ENCODE measurements at regions of chr1 and their contacts with region 1.

Region 1: GRCh38 chr1:212857992-212858460 is at the start of gene FLVCR1:
- DNase-seq: peak; percentile 96
- H3K4me3 Mint-ChIP-seq: peak within 1 kb of the TSS; percentile 53
- H3K27ac Mint-ChIP-seq: peak within 1 kb of the TSS; percentile 98
- H3K4me1 Mint-ChIP-seq: peaks cover 15% of the 10 kb centered on the region
- H3K27me3 Mint-ChIP-seq: peaks cover 2% of the 10 kb centered on the region
- total RNA-seq, gene FLVCR1: 18.5 and 18.7 TPM in 2 replicates

Region 2: DNA sequence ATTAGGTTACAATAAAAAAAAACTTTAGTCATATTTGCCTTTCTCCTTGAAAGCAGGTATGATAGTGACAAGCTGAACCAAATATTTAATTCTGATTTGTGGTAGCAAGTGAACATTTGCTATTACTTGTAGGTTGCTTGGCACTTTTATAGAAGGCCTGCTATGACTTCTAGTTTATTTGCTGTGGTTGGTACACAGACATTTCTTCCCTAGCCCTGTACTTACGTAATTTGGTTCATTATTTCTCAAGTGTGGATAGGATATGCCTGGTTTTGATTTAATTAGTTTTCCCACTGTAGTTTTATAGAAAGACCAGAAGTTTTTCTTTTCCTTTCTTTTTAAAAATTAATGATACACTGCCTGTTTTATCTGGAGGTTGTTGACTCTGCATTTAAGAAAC is 516.9 kb before region 1 on chr1:
- intact Hi-C with region 1: no loop called
- DNase-seq: no peak
- H3K4me3 Mint-ChIP-seq: no peak overlapping the region
- H3K27ac Mint-ChIP-seq: no peak overlapping the region
- H3K4me1 Mint-ChIP-seq: no peaks in the 10 kb centered on the region
- H3K27me3 Mint-ChIP-seq: no peaks in the 10 kb centered on the region

Region 3: GRCh38 chr1:212621951-212622305 is 236.1 kb before region 1 on chr1:
- intact Hi-C with region 1: no loop called
- DNase-seq: no peak
- H3K4me3 Mint-ChIP-seq: no peak overlapping the region
- H3K27ac Mint-ChIP-seq: no peak overlapping the region
- H3K4me1 Mint-ChIP-seq: peaks cover 18% of the 10 kb centered on the region
- H3K27me3 Mint-ChIP-seq: peaks cover 4% of the 10 kb centered on the region

Region 4: GRCh38 chr1:212873518-212873917 is 15.5 kb after region 1 on chr1:
- intact Hi-C with region 1: no loop called
- DNase-seq: no peak
- H3K4me3 Mint-ChIP-seq: no peak overlapping the region
- H3K27ac Mint-ChIP-seq: no peak overlapping the region
- H3K4me1 Mint-ChIP-seq: no peaks in the 10 kb centered on the region
- H3K27me3 Mint-ChIP-seq: no peaks in the 10 kb centered on the region

Region 5: GRCh38 chr1:212950243-212951125 is 92.5 kb after region 1 on chr1 and contains the start of gene VASH2:
- intact Hi-C with region 1: loop called (anchors 1 kb)
- DNase-seq: peak; percentile 61
- H3K4me3 Mint-ChIP-seq: peak within 1 kb of the TSS; percentile 82
- H3K27ac Mint-ChIP-seq: no peak within 1 kb of the TSS
- H3K4me1 Mint-ChIP-seq: peaks cover 6% of the 10 kb centered on the region
- H3K27me3 Mint-ChIP-seq: peaks cover 52% of the 10 kb centered on the region
- total RNA-seq, gene VASH2: 0.10 and 0.39 TPM in 2 replicates

Region 6: GRCh38 chr1:213051127-213051880 is 193.3 kb after region 1 on chr1 and contains the start of gene RPS6KC1:
- intact Hi-C with region 1: loop called (anchors 1 kb)
- DNase-seq: peak; percentile 74
- H3K4me3 Mint-ChIP-seq: peak within 1 kb of the TSS; percentile 96
- H3K27ac Mint-ChIP-seq: peak within 1 kb of the TSS; percentile 90
- H3K4me1 Mint-ChIP-seq: peaks cover 37% of the 10 kb centered on the region
- H3K27me3 Mint-ChIP-seq: peaks cover 9% of the 10 kb centered on the region
- total RNA-seq, gene RPS6KC1: 7.2 and 7.5 TPM in 2 replicates

Region 7: DNA sequence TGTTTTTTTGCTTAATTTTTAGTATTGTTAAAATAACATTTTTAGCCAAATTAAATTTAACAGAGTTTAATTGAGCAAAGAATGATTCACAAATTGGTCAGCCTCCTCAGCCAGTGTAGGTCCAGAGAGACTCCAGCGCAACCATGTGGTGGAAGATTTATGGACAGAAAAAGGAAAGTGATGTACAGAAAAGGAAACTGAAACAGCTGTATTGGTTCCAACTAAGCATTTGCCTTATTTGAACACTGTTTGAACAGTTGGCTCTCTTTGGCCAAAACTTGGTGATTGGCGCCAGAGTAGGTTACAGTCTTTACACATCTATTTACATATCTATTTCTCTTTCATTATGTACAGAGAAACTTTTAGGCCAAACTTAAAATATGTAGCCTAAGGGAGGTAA is 212.4 kb after region 1 on chr1:
- intact Hi-C with region 1: loop called (anchors 5 kb)
- DNase-seq: peak; percentile 17
- H3K4me3 Mint-ChIP-seq: no peak overlapping the region
- H3K27ac Mint-ChIP-seq: peak overlapping the region; percentile 12
- H3K4me1 Mint-ChIP-seq: peaks cover 32% of the 10 kb centered on the region
- H3K27me3 Mint-ChIP-seq: no peaks in the 10 kb centered on the region

Measured in activated T-helper 1 cell treated with anti-CD3 and anti-CD28 coated beads, Interleukin-12 subunit alpha, Interleukin-12 subunit beta, Interleukin-2, Interleukin-4 antibody, amounts not matched to agents 30 ng/mL and 10 ng/mL and 1 ng/mL, durations not matched to agents 14 hours and 24 hours and 36 hours (primary cell).